Activated CD4-positive, alpha-beta memory T cell treated with anti-CD3 and anti-CD28 coated beads for 36 hours (primary cell): ENCODE measurements at regions of chr14 and their contacts with region 1.

Region 1: GRCh38 chr14:52325126-52325525 is 11.0 kb downstream of the PTGER2 start:
- DNase-seq: peak; percentile 53
- H3K4me3 Mint-ChIP-seq: no peak overlapping the region
- H3K27ac Mint-ChIP-seq: peak overlapping the region; percentile 50
- H3K4me1 Mint-ChIP-seq: peaks cover 72% of the 10 kb centered on the region
- H3K27me3 Mint-ChIP-seq: no peaks in the 10 kb centered on the region

Region 2: DNA sequence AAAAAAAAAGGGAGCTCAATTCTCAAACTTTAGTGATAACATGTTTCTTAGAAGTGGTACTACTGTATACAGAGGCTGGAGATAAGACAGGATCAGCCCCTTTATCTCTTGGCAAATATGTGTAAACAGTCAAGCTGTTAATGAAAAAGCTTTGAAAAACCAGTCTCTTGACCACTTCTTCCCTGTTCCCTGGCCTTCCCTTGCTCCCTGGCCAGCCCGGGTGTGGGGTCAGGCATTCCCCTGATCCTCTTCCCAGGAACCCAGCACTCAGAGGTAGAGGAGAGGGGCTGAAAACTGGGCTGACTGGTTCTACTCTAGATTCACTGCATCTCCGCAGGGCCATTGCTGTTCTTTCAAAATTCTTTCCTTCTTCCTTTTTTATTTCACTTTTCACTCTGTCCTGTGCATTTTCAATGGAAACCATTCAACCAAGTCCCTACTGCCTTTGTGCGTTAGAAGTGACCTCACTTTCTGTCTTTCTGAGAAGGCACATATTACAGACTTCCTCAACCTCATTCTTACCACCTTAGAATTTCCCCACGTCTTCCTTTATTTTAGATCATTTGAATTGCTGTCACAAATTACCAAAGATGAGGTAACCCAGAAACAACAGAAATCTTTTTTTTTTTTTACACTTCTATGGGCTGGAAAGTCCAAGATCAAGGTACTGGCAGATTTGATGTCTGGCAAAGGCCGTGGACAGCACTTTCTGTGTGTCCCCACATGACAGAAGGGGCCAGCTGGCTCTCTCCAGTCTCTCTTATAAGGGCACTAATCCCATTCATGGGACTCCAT is 459.0 kb before region 1 on chr14:
- CTCF ChIA-PET with region 1: no interaction called
- POLR2A ChIA-PET with region 1: no interaction called
- intact Hi-C with region 1: loop called (anchors 5 kb)
- DNase-seq: peak; percentile 46
- H3K4me3 Mint-ChIP-seq: no peak overlapping the region
- H3K27ac Mint-ChIP-seq: no peak overlapping the region
- H3K4me1 Mint-ChIP-seq: peaks cover 19% of the 10 kb centered on the region
- H3K27me3 Mint-ChIP-seq: no peaks in the 10 kb centered on the region

Region 3: DNA sequence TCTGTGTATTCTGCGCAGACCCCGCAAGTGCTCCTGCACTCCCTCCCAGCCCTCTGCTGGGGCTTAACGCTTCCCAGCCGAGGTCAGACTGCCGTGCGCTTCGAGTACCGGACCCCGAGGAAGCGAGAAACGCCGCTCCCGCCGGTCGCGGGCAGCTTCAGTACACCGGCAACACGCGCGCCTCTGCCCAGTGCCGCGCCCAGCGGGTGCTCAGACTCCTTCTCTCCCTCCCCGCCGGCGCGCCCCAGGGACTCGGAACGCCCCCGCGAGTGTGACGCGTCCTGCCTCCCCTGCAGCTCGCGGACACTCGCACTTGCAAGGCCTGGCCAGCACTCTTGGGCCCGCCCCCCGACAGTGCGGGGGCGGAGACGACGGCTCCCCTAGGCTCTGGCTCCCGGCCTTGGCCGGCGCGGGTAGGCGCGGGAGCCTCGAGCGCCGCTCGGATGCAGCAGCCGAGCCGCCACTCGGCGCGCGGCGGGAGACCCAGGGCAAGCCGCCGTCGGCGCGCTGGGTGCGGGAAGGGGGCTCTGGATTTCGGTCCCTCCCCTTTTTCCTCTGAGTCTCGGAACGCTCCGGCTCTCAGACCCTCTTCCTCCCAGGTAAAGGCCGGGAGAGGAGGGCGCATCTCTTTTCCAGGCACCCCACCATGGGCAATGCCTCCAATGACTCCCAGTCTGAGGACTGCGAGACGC is 11.1 kb before region 1 on chr14 and contains the start of gene PTGER2:
- CTCF ChIA-PET with region 1: interaction called, 7 read pairs
- POLR2A ChIA-PET with region 1: interaction called, 23 read pairs
- intact Hi-C with region 1: loop called (anchors 1 kb)
- DNase-seq: peak; percentile 90
- H3K4me3 Mint-ChIP-seq: peak within 1 kb of the TSS; percentile 97
- H3K27ac Mint-ChIP-seq: peak within 1 kb of the TSS; percentile 90
- H3K4me1 Mint-ChIP-seq: peaks cover 69% of the 10 kb centered on the region
- H3K27me3 Mint-ChIP-seq: peaks cover 6% of the 10 kb centered on the region
- total RNA-seq, gene PTGER2: 10.7 to 12.9 TPM

Region 4: DNA sequence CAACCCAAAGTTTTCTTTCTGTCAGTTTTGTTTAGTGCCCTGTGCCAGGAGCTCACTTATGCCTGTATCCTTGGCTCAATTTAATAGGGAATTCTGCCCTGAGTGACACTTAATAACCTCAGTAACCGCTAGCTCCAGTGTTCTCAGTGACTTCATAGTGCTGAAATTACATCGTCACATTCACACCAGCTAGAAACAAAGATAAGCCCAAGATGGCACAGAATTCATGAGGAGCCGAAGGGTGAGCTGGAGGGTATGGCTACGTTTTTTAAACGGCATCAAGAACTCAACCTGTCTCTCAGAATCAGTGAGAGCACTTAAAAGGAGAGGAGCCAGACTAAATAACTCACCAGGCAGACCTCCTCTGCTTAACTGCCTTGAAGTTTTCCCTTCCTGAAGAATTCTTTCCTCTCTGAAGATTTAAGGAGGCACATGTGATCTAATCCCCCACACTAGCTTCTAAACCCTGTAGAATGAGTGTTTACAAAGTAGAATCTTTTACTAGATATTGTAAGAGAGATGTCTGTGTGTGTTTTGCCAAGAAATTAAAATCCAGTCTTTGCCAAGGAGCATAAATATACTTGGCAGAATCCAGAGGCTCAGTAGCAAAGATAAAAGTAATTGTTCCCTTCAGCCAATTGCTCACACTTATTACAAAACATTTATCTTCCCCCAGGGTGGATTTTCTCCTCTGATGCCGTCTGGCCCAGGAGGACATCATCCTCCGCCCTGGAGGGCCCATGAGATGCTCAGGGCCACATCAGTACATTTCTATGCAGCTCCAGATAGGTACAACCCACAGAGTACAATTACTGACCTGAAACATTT is 26.3 kb after region 1 on chr14:
- CTCF ChIA-PET with region 1: interaction called, 4 read pairs
- POLR2A ChIA-PET with region 1: interaction called, 4 read pairs
- intact Hi-C with region 1: loop called (anchors 1 kb)
- DNase-seq: no peak
- H3K4me3 Mint-ChIP-seq: peak overlapping the region; percentile 42
- H3K27ac Mint-ChIP-seq: peak overlapping the region; percentile 84
- H3K4me1 Mint-ChIP-seq: peaks cover 66% of the 10 kb centered on the region
- H3K27me3 Mint-ChIP-seq: no peaks in the 10 kb centered on the region

Region 5: GRCh38 chr14:52402812-52403526 is 77.8 kb after region 1 on chr14:
- CTCF ChIA-PET with region 1: interaction called, 7 read pairs
- POLR2A ChIA-PET with region 1: interaction called, 6 read pairs
- intact Hi-C with region 1: loop called (anchors 1 kb)
- DNase-seq: peak; percentile 51
- H3K4me3 Mint-ChIP-seq: no peak overlapping the region
- H3K27ac Mint-ChIP-seq: peak overlapping the region; percentile 16
- H3K4me1 Mint-ChIP-seq: peaks cover 59% of the 10 kb centered on the region
- H3K27me3 Mint-ChIP-seq: peaks cover 15% of the 10 kb centered on the region

Region 6: DNA sequence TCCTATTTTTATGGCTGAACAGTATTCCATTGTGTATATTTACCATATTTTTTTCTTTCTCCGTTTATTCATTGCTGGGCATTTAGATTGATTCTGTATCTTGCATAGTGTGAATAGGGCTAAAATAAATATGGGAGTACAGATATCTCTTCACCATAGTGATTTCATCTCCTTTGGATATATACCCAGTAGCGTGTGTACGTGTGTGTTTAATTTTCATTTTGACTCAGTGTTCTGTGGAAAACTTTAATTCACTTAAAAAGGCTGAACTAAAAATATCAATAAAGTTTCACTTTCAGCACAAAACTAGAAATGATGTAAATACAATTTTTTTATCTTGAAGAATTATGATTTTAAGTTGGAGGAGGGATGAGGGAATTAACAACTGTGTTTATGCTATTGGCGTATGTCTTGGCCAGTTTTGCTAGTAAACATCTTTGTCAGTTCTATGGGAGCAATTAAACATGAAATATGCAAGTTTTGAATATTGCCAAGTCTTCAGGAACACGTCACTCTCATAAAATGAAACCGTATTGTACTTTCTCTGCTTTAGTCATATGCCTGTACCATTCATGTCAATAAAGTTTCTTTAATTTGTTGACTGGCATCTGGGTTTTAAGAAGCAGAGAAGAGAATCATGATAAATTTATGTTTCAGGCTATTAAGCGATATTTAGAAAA is 88.7 kb after region 1 on chr14:
- CTCF ChIA-PET with region 1: no interaction called
- POLR2A ChIA-PET with region 1: no interaction called
- intact Hi-C with region 1: loop called (anchors 1 kb)
- DNase-seq: no peak
- H3K4me3 Mint-ChIP-seq: peak overlapping the region; percentile 4
- H3K27ac Mint-ChIP-seq: peak overlapping the region; percentile 69
- H3K4me1 Mint-ChIP-seq: peaks cover 49% of the 10 kb centered on the region
- H3K27me3 Mint-ChIP-seq: no peaks in the 10 kb centered on the region

Region 7: DNA sequence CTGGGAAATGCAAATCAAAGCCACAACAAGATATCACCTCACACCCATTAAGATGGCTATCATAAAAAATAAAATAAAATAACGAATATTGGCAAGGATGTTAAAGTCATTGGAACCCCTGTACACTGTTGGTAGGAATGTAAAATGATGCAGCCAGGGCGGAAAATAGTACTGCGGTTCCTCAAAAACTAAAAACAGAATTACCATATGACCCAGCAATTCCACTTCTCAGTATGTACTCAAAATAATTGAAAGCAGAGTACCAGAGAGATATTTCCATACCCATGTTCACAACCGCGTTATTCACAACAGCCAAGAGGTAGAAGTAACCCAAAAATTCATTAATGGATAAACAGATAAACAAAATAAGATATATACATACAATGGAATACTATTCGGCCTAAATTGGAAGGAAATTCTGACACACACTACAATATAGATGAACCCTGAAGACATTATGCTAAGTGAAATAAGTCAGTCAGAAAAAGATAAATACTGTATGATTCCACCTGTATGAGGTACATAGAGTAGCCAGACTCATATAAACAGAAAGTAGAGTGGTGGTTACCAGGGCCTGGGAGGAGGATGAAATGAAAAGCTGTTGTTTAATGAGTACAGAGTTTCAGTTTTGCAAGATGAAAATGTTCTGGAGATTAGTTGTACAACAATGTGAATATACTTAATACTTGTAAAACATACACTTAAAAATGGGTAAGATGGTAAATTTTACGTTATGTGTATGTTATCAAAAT is 142.6 kb after region 1 on chr14:
- CTCF ChIA-PET with region 1: interaction called, 3 read pairs
- POLR2A ChIA-PET with region 1: no interaction called
- intact Hi-C with region 1: loop called (anchors 1 kb)
- DNase-seq: peak; percentile 15
- H3K4me3 Mint-ChIP-seq: no peak overlapping the region
- H3K27ac Mint-ChIP-seq: no peak overlapping the region
- H3K4me1 Mint-ChIP-seq: peaks cover 8% of the 10 kb centered on the region
- H3K27me3 Mint-ChIP-seq: no peaks in the 10 kb centered on the region